ENCODE measurements at regions of chr5 and their contacts with region 1.

Region 1: DNA sequence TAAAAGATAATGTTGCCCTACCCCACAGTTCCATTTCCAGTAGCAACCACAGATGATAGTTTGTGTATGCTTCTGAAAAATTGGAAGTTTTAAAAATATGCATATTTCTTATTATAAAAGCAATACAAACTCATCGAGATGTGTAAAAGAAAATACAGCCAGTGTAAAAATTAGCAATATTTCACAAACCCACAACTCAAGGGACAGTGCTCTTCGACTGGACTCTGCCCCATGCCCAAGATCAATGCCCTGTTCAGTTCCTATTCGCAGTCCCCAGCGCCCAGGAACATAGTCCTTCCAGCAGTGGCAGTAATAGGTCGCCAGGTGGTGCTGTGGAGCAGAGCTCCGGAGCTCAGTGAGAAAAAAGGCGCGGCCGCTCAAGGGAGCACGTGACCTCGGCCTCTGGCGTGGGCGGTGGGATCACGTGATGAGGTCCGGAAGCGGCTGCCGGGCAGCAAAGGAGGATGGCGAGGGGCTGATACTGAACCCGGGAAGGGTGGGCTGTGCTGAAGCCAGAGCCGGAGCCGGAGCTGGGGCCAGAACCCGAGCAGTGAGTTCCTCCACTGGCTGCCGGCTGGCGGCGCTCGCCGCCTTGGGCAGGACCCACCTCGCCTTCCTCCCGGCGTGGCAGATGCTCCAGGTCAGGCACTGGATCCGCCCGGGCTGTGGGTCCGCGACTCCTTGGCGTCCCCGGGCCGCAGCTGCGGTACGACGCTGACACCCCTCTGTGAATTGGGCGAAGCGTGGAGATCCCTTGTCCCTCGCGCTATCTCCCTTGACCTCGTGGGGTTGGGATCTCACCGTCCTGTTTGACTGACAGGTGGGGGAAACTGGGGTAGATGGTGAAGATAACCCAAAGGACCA is at the start of gene SLC36A1:
- DNase-seq: peak; percentile 94
- H3K4me3 ChIP-seq: peak within 1 kb of the TSS; percentile 69
- H3K27ac ChIP-seq: no peak within 1 kb of the TSS
- H3K4me1 ChIP-seq: peaks cover 5% of the 10 kb centered on the region
- H3K27me3 ChIP-seq: peaks cover 5% of the 10 kb centered on the region
- CTCF ChIP-seq: peak; percentile 96
- total RNA-seq, gene SLC36A1: 8.8 and 12.5 TPM in 2 replicates

Region 2: DNA sequence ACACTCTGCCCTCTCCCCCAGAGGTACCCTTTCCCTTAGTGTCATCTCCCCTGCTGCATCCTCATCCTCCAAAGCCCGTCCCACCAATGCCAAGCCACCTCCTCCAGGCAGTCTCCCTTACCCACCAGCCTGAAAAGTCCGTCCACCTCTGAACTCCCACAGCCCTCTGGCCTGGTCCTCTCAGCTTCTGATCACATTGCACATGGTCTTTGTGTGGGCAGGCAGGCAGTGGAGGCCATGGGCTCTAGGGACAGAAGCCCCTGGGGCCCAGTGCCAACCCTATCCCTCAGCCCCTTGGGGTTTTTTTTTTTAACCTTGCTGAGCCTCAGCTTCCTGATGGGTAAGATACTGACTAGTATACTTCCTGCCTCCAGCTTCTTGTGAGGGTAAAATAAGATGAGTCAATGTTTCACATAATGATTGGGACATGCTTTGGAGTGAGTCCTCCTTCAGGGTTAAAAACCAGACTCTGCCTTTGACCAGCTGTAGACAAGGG is 1380.5 kb before region 1 on chr5:
- CTCF ChIA-PET with region 1: no interaction called
- POLR2A ChIA-PET with region 1: no interaction called
- intact Hi-C with region 1: no loop called
- DNase-seq: no peak
- H3K4me3 ChIP-seq: no peak overlapping the region
- H3K27ac ChIP-seq: no peak overlapping the region
- H3K4me1 ChIP-seq: no peaks in the 10 kb centered on the region
- H3K27me3 ChIP-seq: no peaks in the 10 kb centered on the region
- CTCF ChIP-seq: no peak

Region 3: DNA sequence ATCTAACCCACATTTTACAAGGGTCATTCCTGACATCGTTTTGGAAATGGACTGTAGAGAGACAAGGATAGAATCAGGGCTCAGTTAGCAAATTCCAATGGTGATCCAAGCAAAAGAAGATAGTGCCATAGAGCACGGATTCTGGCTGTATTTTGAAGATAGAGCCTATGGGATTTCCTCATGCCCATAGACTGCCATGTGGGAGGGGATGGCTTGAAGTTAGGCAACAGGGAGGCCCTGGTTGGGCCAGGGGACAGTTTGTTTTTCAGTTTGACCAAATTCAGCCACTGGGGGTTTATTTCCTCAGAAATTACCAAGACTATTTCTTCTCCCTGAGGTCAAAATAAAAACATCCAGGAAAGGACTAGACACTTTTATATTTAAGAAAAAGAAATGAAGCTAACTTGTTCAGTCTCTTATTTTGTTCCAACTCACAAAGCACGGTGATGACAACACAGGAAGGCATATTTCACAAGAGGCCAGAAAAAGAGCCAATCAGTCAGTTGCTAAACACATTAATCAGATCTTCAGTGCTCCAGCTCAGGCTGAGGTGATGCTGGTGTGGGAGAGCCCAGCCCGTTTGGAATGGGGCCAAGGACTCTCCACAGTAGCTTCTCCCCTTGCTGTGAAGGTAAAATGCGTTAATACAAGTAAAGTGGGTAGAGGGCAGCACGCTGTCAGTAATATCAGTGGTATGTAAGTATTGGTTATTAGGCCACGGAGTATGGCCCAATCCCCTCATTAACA is 684.2 kb before region 1 on chr5:
- CTCF ChIA-PET with region 1: no interaction called
- POLR2A ChIA-PET with region 1: no interaction called
- intact Hi-C with region 1: no loop called
- DNase-seq: peak; percentile 35
- H3K4me3 ChIP-seq: no peak overlapping the region
- H3K27ac ChIP-seq: no peak overlapping the region
- H3K4me1 ChIP-seq: peaks cover 7% of the 10 kb centered on the region
- H3K27me3 ChIP-seq: no peaks in the 10 kb centered on the region
- CTCF ChIP-seq: no peak

Region 4: GRCh38 chr5:150918613-150919012 is 528.8 kb before region 1 on chr5:
- CTCF ChIA-PET with region 1: no interaction called
- POLR2A ChIA-PET with region 1: no interaction called
- intact Hi-C with region 1: no loop called
- DNase-seq: peak; percentile 23
- H3K4me3 ChIP-seq: no peak overlapping the region
- H3K27ac ChIP-seq: no peak overlapping the region
- H3K4me1 ChIP-seq: no peaks in the 10 kb centered on the region
- H3K27me3 ChIP-seq: no peaks in the 10 kb centered on the region
- CTCF ChIP-seq: no peak

Region 5: GRCh38 chr5:151427258-151427657 is 20.1 kb before region 1 on chr5:
- CTCF ChIA-PET with region 1: no interaction called
- POLR2A ChIA-PET with region 1: no interaction called
- intact Hi-C with region 1: no loop called
- DNase-seq: no peak
- H3K4me3 ChIP-seq: no peak overlapping the region
- H3K27ac ChIP-seq: no peak overlapping the region
- H3K4me1 ChIP-seq: no peaks in the 10 kb centered on the region
- H3K27me3 ChIP-seq: no peaks in the 10 kb centered on the region
- CTCF ChIP-seq: no peak

Region 6: DNA sequence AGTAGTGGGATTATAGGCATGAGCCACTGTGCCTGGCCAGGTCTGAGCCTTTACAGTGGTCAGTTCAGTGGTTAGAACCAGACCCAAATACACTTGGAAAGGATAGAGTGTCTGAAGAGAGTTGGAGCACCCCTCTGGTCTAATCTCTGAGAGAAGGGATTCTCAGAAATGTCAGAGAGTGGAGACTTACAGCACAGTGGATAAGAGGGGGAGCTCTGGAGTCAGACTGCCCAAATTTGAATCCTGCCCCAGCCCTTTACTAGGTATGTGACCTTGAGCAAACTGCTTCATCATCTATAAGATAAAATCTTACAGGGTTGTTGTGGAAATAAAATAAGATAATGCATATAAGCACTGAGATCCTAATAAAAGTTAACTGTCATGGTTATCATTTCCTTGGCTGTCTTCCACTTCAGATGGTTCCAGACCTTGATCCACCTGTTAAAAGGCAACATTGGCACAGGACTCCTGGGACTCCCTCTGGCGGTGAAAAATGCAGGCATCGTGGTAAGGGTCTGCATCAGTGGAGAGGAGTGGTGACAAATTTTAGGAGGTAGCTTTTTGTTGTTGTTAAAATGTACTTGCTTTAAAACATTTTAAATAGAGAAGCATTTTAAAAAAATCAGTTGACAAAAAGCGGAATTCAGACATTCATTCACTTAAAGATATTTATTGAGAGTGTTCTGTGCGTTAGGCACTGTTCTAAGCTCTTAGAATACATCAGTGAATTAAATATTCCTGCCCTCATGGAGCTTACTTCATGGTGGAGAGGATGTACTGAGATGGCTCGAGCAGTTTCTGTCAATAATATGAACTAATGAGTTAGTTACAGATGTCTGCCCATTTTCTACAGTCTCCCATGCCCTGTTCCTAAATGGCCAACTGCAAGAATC is 16.0 kb after region 1 on chr5:
- CTCF ChIA-PET with region 1: interaction called, 3 read pairs
- POLR2A ChIA-PET with region 1: no interaction called
- intact Hi-C with region 1: loop called (anchors 1 kb)
- DNase-seq: no peak
- H3K4me3 ChIP-seq: no peak overlapping the region
- H3K27ac ChIP-seq: no peak overlapping the region
- H3K4me1 ChIP-seq: no peaks in the 10 kb centered on the region
- H3K27me3 ChIP-seq: no peaks in the 10 kb centered on the region
- CTCF ChIP-seq: peak; percentile 63

Region 7: DNA sequence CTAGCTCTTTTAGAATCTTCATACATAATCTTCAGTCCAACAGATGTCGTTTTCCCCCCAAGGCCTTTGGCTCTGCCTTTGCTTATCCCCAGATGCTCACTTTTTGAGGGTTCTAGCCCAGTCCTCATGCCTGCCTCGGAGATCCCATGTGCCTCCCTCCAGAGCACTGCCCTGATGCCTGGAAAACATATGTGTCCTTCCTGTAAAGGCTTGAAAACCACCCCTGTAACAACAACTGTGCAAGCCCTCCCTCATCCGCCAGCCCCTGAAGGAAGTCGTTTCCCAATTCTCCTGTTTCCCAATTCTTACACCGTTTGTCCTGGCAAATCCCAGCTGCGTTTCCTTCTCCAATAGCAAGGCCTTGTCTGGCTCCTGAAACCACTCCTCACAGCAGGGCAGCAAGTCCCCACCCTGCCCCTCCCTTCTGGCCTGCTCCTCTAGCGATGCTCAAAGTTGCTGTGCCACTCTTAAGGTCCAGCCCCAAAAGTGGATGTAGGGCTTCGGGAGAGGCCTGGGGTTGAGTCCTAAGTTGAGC is 52.2 kb after region 1 on chr5:
- CTCF ChIA-PET with region 1: no interaction called
- POLR2A ChIA-PET with region 1: no interaction called
- intact Hi-C with region 1: loop called (anchors 1 kb)
- DNase-seq: no peak
- H3K4me3 ChIP-seq: no peak overlapping the region
- H3K27ac ChIP-seq: no peak overlapping the region
- H3K4me1 ChIP-seq: no peaks in the 10 kb centered on the region
- H3K27me3 ChIP-seq: no peaks in the 10 kb centered on the region
- CTCF ChIP-seq: no peak

Region 8: DNA sequence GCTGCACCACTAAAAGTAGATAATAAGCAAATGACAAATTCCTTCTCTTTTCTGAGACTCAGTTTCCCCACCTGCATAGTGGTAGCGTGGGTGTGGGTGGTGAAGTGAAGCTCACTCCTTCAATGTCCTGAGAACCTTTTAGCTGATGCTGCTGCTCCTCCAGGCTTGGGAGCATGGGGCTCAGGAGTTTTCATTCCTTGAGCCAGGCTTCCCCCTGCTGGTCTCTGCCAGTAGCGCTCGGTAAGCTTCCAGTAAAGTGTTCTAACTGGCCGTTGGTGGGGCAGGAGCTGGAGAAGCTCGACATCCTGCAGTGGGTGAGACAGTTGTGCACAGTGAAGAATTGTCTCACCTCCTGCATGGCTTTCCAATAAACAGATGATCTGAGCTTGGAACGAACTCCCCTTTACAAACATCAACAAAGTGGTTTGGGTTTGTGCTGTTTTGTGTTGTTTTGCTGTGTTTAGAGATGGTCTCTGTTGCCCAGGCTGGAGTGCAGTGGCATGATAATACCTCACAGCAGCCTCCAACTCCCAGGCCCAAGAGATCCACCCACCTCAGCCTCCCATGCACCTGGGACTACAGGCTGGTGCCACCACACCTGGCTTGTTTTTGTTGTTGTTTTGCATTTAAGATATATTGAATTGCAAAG is 204.7 kb after region 1 on chr5:
- CTCF ChIA-PET with region 1: interaction called, 28 read pairs
- POLR2A ChIA-PET with region 1: no interaction called
- intact Hi-C with region 1: loop called (anchors 1 kb)
- DNase-seq: peak; percentile 84
- H3K4me3 ChIP-seq: no peak overlapping the region
- H3K27ac ChIP-seq: no peak overlapping the region
- H3K4me1 ChIP-seq: no peaks in the 10 kb centered on the region
- H3K27me3 ChIP-seq: no peaks in the 10 kb centered on the region
- CTCF ChIP-seq: peak; percentile 88

Region 9: DNA sequence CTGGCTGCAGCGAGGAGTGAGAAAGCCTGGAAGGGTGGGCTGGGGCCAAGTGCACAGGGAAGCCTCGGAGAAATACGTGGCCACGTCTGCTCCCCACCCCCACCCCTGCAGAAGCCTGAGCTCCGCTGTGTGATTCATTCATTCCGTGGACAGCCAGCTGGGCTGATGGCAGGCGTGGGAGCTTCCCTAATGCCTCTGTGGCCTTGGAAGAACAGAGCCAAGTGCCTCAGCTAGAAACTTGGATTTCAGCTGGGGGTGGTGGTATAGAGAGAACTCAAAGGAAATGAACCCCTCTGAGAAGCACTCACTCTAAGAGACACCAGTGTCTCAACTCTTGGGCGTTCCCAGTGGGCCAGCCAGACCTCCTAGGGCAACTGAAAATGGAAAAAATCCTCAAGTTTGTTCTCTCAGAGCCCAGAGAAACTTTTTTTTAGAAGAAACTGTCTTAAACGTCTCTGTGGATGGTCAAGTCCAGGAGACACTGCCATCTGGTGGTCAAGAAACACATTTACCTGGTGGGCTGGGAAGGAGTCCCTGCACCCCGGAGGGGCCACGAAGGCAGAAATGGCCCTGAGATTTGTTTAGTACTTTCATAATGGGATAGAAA is 293.0 kb after region 1 on chr5:
- CTCF ChIA-PET with region 1: no interaction called
- POLR2A ChIA-PET with region 1: no interaction called
- intact Hi-C with region 1: loop called (anchors 2 kb)
- DNase-seq: peak; percentile 84
- H3K4me3 ChIP-seq: no peak overlapping the region
- H3K27ac ChIP-seq: peak overlapping the region; percentile 43
- H3K4me1 ChIP-seq: peaks cover 14% of the 10 kb centered on the region
- H3K27me3 ChIP-seq: no peaks in the 10 kb centered on the region
- CTCF ChIP-seq: peak; percentile 90